Cardiac septum (tissue), 1 donor: ENCODE measurements at regions of chr19 and their contacts with region 1.

Region 1: DNA sequence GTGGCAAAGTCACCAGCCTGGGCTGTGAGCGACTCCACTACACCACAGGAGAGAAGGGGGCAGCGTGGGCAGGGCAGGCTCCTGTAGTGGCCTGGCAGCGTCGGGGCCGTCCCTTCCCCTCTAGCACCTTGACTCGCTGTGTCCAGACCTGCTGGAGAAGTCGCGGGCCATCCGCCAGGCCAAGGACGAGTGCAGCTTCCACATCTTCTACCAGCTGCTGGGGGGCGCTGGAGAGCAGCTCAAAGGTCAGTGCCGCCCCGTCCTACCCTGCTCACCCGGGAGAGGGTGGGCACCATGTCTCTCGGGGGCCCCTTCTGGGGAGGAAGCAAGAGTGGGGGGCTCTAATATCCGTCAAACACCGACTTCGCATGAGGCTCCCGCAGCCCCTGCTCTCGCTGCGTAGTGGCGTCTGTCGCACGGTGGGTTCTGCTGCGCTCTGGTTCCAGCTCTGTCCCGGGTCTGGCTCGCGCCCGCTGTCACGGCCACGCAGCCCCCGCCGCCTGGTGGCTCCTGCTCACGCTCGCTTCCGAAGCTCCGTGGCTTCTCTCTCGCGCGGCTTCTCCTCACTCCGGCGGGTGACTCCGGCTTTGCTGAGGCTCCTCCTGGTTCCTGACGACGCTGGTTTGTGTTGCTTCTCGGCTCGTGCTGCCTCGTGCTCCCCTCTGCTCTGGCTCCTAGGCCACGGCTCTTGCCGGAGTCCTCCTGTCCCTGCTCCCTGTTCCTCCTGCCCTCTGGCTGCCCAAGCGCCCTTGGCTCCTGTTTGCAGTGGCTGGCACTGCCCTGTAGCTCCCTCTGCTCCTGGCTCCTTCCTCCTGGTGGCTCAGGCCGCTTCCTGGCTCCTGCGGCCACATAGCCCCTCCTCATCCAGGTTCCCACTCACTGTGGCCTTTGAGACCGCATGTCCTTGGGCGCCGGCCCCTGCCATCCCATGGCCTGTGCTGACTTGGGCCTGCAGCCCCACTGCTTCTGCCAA is 27.2 kb downstream of the MYH14 start:
- DNase-seq: no peak

Region 2: GRCh38 chr19:50050384-50051224 is 180.1 kb before region 1 on chr19:
- intact Hi-C with region 1: no loop called
- DNase-seq: peak; percentile 88

Region 3: DNA sequence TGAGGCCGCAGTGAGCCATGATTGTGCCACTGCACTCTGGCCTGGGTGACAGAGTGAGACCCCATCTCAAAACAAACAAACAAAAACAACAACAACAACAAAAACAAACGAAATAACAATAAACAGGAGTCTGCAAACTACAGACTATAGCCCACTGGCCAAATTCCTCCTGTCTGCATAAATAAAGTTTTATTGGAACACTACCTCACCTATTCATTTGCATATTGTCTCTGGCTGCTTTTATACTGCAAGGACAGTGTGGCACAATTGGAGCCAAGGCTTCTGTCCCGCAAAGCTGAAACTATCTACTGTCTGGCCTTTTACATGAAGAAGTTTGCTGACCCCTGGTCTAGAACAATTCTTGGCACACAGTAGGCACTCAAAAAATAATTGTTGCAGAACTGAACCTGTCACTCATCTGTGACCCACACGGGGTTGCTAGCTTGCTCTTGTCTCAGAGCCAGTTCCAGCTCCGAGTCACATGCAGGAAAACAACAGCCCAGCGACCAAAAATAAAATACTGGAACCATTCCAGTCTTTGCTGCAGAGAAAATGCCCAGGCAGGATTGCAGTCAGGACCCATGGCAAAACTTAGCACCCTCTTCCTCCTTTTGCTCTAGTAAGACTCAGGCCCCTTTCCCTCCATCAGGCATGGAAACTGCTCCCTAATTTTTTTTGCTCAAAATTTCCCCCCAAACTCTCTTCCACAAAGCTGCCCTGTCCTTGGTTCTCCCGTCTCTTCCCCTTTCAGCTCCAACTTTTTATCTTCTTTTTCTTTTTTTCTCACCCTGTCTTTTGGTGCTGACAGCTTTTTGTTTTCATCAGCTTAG is 32.0 kb before region 1 on chr19:
- intact Hi-C with region 1: loop called (anchors 1 kb)
- DNase-seq: no peak